ENCODE measurements at regions of chr4 and their contacts with region 1.

Region 1: GRCh38 chr4:110631584-110632505 is 9.0 kb upstream of the PITX2 start:
- ATAC-seq: peak in 6 of 8 experiments; percentile 86 to 99 (median 98)
- H3K4me3 ChIP-seq: peak overlapping the region; percentile 27 to 40 (median 30)
- H3K27ac ChIP-seq: no peak overlapping the region
- H3K4me1 ChIP-seq: peaks cover 0 to 4% of the 10 kb centered on the region in 2 donors

Region 2: GRCh38 chr4:110840221-110840654 is 208.4 kb after region 1 on chr4:
- in situ Hi-C with region 1: no loop called
- ATAC-seq: peak in 2 of 8 experiments; percentile 23 to 25
- H3K4me3 ChIP-seq: no peak overlapping the region
- H3K27ac ChIP-seq: no peak overlapping the region
- H3K4me1 ChIP-seq: no peaks in the 10 kb centered on the region

Region 3: GRCh38 chr4:110970642-110971041 is 338.8 kb after region 1 on chr4:
- in situ Hi-C with region 1: loop called in 2 of 9 experiments (anchors 25 kb)
- ATAC-seq: peak in 2 of 8 experiments; percentile 55 to 65
- H3K4me3 ChIP-seq: no peak overlapping the region
- H3K27ac ChIP-seq: no peak overlapping the region
- H3K4me1 ChIP-seq: no peaks in the 10 kb centered on the region

Region 4: GRCh38 chr4:111631215-111631999 is 999.6 kb after region 1 on chr4:
- in situ Hi-C with region 1: loop called in 6 of 9 experiments (anchors 10 to 25 kb)
- ATAC-seq: peak in 5 of 8 experiments; percentile 12 to 87 (median 46)
- H3K4me3 ChIP-seq: no peak overlapping the region
- H3K27ac ChIP-seq: no peak overlapping the region
- H3K4me1 ChIP-seq: peaks cover 2 to 8% of the 10 kb centered on the region in 2 donors

Region 5: DNA sequence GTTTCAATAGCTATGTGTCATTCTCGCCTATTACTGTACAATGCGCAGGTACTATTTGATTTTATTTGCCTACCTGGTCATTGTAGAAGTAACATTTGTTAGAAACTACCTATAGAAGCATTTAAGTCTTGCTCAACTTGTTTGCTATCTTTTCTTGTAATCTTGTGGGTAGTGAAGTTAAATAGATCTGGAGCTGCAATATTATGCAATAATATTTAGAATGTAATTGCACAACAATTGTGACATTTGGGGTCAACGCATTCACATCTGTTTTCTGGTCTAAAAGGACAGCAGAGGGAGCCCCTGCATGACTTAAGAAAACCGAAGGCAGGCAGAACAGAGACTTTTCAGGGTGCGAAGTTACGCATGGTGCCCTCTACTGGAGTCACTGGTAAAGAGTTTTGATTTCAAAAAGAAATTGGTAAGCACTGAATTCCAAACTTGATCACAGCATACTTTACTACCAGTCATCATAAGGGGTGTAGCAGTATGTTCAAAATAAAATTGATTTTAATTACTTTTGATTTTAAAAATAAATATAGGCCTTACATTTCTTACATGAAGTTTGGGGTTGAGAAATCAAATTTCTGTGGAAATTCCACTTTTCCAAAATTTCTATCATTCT is 1010.2 kb after region 1 on chr4:
- in situ Hi-C with region 1: loop called in 6 of 9 experiments (anchors 10 to 25 kb)
- ATAC-seq: peak; percentile 40 to 93 (median 75)
- H3K4me3 ChIP-seq: no peak overlapping the region
- H3K27ac ChIP-seq: no peak overlapping the region
- H3K4me1 ChIP-seq: no peaks in the 10 kb centered on the region

Region 6: DNA sequence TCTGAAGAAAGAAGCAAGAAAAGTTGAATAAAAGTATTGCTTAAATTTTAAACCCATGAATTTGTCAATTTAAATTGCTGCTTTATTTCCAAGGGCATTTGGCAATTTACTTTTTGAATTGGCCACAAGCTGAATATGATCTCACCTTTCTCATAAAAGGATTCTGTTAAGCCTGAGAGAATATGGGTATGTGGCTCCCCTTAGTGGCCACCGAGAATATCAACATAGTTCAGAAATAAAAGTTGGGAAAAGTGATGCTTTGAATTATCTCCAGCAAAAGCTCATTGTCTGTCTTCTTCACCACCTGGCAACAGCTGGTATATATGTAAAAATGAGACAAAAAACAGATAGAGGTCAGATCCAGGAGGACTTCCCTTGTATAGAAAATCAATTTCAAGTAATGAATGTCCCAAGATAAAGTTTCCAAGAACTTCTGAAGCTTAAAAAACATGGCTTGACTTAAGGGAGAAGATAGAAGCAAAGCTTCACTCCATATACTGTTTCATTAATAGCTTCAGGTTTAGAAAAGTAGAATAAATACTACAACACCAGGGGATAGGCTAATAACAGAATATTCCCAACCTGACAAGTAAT is 1222.7 kb after region 1 on chr4:
- in situ Hi-C with region 1: loop called in 1 of 9 experiments (anchors 25 kb)
- ATAC-seq: peak in 5 of 8 experiments; percentile 43 to 75 (median 51)
- H3K4me3 ChIP-seq: no peak overlapping the region
- H3K27ac ChIP-seq: no peak overlapping the region
- H3K4me1 ChIP-seq: no peaks in the 10 kb centered on the region

Region 7: DNA sequence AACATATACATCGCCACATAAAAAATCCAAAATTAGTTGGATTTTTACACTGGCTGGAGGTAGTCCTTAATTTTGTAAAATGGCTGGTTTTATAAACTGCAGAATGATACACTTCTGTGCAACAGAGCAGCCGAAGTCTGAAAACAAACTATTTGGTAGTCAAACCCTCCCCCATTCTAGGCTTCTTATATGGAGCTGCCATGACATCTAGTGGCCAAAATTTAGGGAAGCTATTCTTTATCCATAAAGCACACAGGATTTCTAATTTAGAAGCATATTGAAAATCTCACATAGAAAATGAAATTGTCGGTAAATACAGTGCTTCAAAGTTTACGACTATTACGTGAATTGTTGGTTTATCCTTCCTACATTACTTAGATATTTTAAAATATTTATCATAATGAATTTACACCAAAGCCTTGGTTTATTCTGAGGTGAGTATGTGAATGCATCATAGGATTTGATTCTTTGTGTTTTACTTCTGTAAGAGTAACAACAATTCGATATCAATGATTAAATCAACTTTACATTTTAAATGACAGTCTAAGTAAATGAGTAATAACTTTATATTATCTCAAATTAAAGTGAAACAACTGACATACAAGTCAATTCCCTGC is 1400.0 kb after region 1 on chr4:
- in situ Hi-C with region 1: loop called in 2 of 9 experiments (anchors 25 kb)
- ATAC-seq: peak in 4 of 8 experiments; percentile 63 to 83 (median 70)
- H3K4me3 ChIP-seq: no peak overlapping the region
- H3K27ac ChIP-seq: no peak overlapping the region
- H3K4me1 ChIP-seq: no peaks in the 10 kb centered on the region

Measured in motor neuron (in vitro differentiated cells).